ENCODE measurements at regions of chr14 and their contacts with region 1.

Region 1: GRCh38 chr14:69611201-69612011 is at the start of gene SUSD6:
- DNase-seq: peak; percentile 82 to 92 (median 92)
- H3K4me3 ChIP-seq: peak within 1 kb of the TSS; percentile 45 to 87 (median 76)
- H3K27ac ChIP-seq: peak within 1 kb of the TSS; percentile 78 to 90
- H3K4me1 ChIP-seq: peaks cover 30 to 58% (median 56%) of the 10 kb centered on the region in 4 experiments
- H3K27me3 ChIP-seq: no peaks in the 10 kb centered on the region

Region 2: DNA sequence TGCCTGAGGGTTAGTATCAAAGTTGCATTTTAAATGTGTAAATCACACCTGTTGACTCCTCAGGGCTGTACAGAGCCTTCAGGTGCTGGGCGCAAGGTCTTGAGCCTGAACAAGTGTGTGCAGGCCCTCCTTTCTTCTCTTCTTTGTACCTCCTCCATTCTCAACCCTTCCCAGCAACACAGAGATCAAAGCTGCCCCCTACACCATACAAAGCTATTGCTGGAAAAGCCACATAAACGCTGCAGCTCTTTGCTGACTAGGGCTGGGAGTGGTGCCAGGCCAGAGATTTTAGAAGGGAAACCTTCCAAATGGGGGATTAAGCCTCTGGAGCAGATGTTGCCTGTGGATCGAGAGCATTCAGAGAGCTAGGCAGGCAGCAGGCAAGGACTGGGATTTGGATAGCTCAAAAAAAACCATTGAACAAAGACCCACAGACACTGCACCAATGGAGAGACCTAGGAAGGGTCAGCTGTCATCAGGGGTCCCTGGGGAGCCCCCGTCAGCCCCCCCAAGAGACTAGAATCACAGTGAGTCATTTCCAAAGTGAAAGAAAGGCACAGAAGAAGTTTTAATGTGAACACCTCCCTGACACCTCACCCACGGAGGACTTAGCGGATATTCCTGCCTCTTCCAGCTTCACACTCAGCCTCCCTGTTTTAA is 18.3 kb before region 1 on chr14:
- CTCF ChIA-PET with region 1: interaction called, 26 read pairs
- POLR2A ChIA-PET with region 1: no interaction called
- DNase-seq: no peak
- H3K4me3 ChIP-seq: no peak overlapping the region
- H3K27ac ChIP-seq: no peak overlapping the region
- H3K4me1 ChIP-seq: no peaks in the 10 kb centered on the region
- H3K27me3 ChIP-seq: no peaks in the 10 kb centered on the region

Measured in common myeloid progenitor, CD34-positive (primary cell).